CD8-positive, alpha-beta T cell (primary cell): ENCODE measurements at regions of chr22 and their contacts with region 1.

Region 1: GRCh38 chr22:25777870-25778269 is 35.9 kb downstream of the MYO18B start:
- DNase-seq: no peak
- ATAC-seq: no peak
- H3K4me3 ChIP-seq: no peak overlapping the region
- H3K4me3 Mint-ChIP-seq: no peak overlapping the region
- H3K27ac ChIP-seq: no peak overlapping the region
- H3K27ac Mint-ChIP-seq: no peak overlapping the region
- H3K4me1 ChIP-seq: no peaks in the 10 kb centered on the region
- H3K4me1 Mint-ChIP-seq: peaks cover 2% of the 10 kb centered on the region
- H3K27me3 ChIP-seq: no peaks in the 10 kb centered on the region
- H3K27me3 Mint-ChIP-seq: peaks cover 5% of the 10 kb centered on the region
- CTCF ChIP-seq: no peak

Region 2: GRCh38 chr22:25202290-25202921 is 575.5 kb before region 1 on chr22:
- CTCF ChIA-PET with region 1: interaction called, 3 read pairs
- POLR2A ChIA-PET with region 1: no interaction called
- intact Hi-C with region 1: loop called (anchors 5 kb)
- DNase-seq: peak; percentile 18 to 64 (median 52)
- ATAC-seq: peak; percentile 68
- H3K4me3 ChIP-seq: no peak overlapping the region
- H3K4me3 Mint-ChIP-seq: no peak overlapping the region
- H3K27ac ChIP-seq: no peak overlapping the region
- H3K27ac Mint-ChIP-seq: no peak overlapping the region
- H3K4me1 ChIP-seq: no peaks in the 10 kb centered on the region
- H3K4me1 Mint-ChIP-seq: no peaks in the 10 kb centered on the region
- H3K27me3 ChIP-seq: no peaks in the 10 kb centered on the region
- H3K27me3 Mint-ChIP-seq: no peaks in the 10 kb centered on the region
- CTCF ChIP-seq: peak; percentile 88

Region 3: GRCh38 chr22:25235547-25236290 is 542.2 kb before region 1 on chr22:
- CTCF ChIA-PET with region 1: no interaction called
- POLR2A ChIA-PET with region 1: no interaction called
- intact Hi-C with region 1: loop called in 1 of 2 experiments (anchors 5 kb)
- DNase-seq: peak; percentile 14 to 74 (median 48)
- ATAC-seq: peak; percentile 65
- H3K4me3 ChIP-seq: no peak overlapping the region
- H3K4me3 Mint-ChIP-seq: no peak overlapping the region
- H3K27ac ChIP-seq: no peak overlapping the region
- H3K27ac Mint-ChIP-seq: no peak overlapping the region
- H3K4me1 ChIP-seq: peaks cover 5% of the 10 kb centered on the region
- H3K4me1 Mint-ChIP-seq: peaks cover 4% of the 10 kb centered on the region
- H3K27me3 ChIP-seq: no peaks in the 10 kb centered on the region
- H3K27me3 Mint-ChIP-seq: peaks cover 51% of the 10 kb centered on the region
- CTCF ChIP-seq: peak; percentile 32

Region 4: DNA sequence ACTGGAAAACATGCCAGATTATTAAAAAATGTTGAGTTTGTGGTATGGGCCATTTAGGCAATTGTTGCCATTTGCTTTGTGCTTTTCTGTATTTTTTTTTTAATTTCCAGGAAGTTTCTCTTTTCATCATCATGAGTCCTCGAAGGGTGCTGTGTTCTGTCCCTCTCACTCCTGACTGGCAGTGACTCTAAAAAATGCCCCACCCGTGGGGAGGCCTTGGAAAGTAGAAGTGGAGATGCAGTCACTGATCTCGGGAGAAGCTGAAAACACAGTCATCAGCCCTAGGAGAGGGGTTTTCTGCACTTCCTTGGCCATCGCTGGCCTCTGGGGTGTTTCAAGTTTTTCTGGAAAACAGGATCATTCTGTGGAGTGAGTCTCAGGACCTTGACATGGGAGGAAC is 311.9 kb before region 1 on chr22:
- CTCF ChIA-PET with region 1: interaction called, 51 read pairs
- POLR2A ChIA-PET with region 1: no interaction called
- intact Hi-C with region 1: loop called in 1 of 2 experiments (anchors 1 kb)
- DNase-seq: no peak
- ATAC-seq: no peak
- H3K4me3 ChIP-seq: no peak overlapping the region
- H3K4me3 Mint-ChIP-seq: no peak overlapping the region
- H3K27ac ChIP-seq: no peak overlapping the region
- H3K27ac Mint-ChIP-seq: no peak overlapping the region
- H3K4me1 ChIP-seq: no peaks in the 10 kb centered on the region
- H3K4me1 Mint-ChIP-seq: peaks cover 2% of the 10 kb centered on the region
- H3K27me3 ChIP-seq: no peaks in the 10 kb centered on the region
- H3K27me3 Mint-ChIP-seq: no peaks in the 10 kb centered on the region
- CTCF ChIP-seq: no peak

Region 5: GRCh38 chr22:25546751-25547150 is 231.1 kb before region 1 on chr22:
- CTCF ChIA-PET with region 1: interaction called, 4 read pairs
- POLR2A ChIA-PET with region 1: no interaction called
- intact Hi-C with region 1: loop called in 1 of 2 experiments (anchors 10 kb)
- DNase-seq: peak in 1 of 9 experiments; percentile 12
- ATAC-seq: no peak
- H3K4me3 ChIP-seq: no peak overlapping the region
- H3K4me3 Mint-ChIP-seq: no peak overlapping the region
- H3K27ac ChIP-seq: no peak overlapping the region
- H3K27ac Mint-ChIP-seq: no peak overlapping the region
- H3K4me1 ChIP-seq: no peaks in the 10 kb centered on the region
- H3K4me1 Mint-ChIP-seq: no peaks in the 10 kb centered on the region
- H3K27me3 ChIP-seq: no peaks in the 10 kb centered on the region
- H3K27me3 Mint-ChIP-seq: peaks cover under 1% of the 10 kb centered on the region
- CTCF ChIP-seq: no peak

Region 6: GRCh38 chr22:25623310-25623734 is 154.5 kb before region 1 on chr22:
- CTCF ChIA-PET with region 1: no interaction called
- POLR2A ChIA-PET with region 1: no interaction called
- intact Hi-C with region 1: loop called in 1 of 2 experiments (anchors 5 kb)
- DNase-seq: no peak
- ATAC-seq: no peak
- H3K4me3 ChIP-seq: no peak overlapping the region
- H3K4me3 Mint-ChIP-seq: no peak overlapping the region
- H3K27ac ChIP-seq: no peak overlapping the region
- H3K27ac Mint-ChIP-seq: no peak overlapping the region
- H3K4me1 ChIP-seq: no peaks in the 10 kb centered on the region
- H3K4me1 Mint-ChIP-seq: peaks cover 7% of the 10 kb centered on the region
- H3K27me3 ChIP-seq: no peaks in the 10 kb centered on the region
- H3K27me3 Mint-ChIP-seq: no peaks in the 10 kb centered on the region
- CTCF ChIP-seq: no peak

Region 7: GRCh38 chr22:25722626-25723025 is 55.2 kb before region 1 on chr22:
- CTCF ChIA-PET with region 1: no interaction called
- POLR2A ChIA-PET with region 1: no interaction called
- intact Hi-C with region 1: no loop called
- DNase-seq: no peak
- ATAC-seq: no peak
- H3K4me3 ChIP-seq: no peak overlapping the region
- H3K4me3 Mint-ChIP-seq: no peak overlapping the region
- H3K27ac ChIP-seq: no peak overlapping the region
- H3K27ac Mint-ChIP-seq: no peak overlapping the region
- H3K4me1 ChIP-seq: no peaks in the 10 kb centered on the region
- H3K4me1 Mint-ChIP-seq: no peaks in the 10 kb centered on the region
- H3K27me3 ChIP-seq: peaks cover 0 to 2% of the 10 kb centered on the region in 2 experiments
- H3K27me3 Mint-ChIP-seq: no peaks in the 10 kb centered on the region
- CTCF ChIP-seq: no peak

Region 8: GRCh38 chr22:25795478-25795877 is 17.6 kb after region 1 on chr22:
- CTCF ChIA-PET with region 1: no interaction called
- POLR2A ChIA-PET with region 1: no interaction called
- intact Hi-C with region 1: no loop called
- DNase-seq: no peak
- ATAC-seq: no peak
- H3K4me3 ChIP-seq: no peak overlapping the region
- H3K4me3 Mint-ChIP-seq: no peak overlapping the region
- H3K27ac ChIP-seq: no peak overlapping the region
- H3K27ac Mint-ChIP-seq: no peak overlapping the region
- H3K4me1 ChIP-seq: no peaks in the 10 kb centered on the region
- H3K4me1 Mint-ChIP-seq: no peaks in the 10 kb centered on the region
- H3K27me3 ChIP-seq: no peaks in the 10 kb centered on the region
- H3K27me3 Mint-ChIP-seq: peaks cover 11% of the 10 kb centered on the region
- CTCF ChIP-seq: no peak

Region 9: GRCh38 chr22:26330966-26331625 is 553.2 kb after region 1 on chr22:
- CTCF ChIA-PET with region 1: interaction called, 6 read pairs
- POLR2A ChIA-PET with region 1: no interaction called
- intact Hi-C with region 1: loop called in 1 of 2 experiments (anchors 5 kb)
- DNase-seq: peak; percentile 21 to 70 (median 46)
- ATAC-seq: peak; percentile 87
- H3K4me3 ChIP-seq: no peak overlapping the region
- H3K4me3 Mint-ChIP-seq: no peak overlapping the region
- H3K27ac ChIP-seq: no peak overlapping the region
- H3K27ac Mint-ChIP-seq: no peak overlapping the region
- H3K4me1 ChIP-seq: no peaks in the 10 kb centered on the region
- H3K4me1 Mint-ChIP-seq: no peaks in the 10 kb centered on the region
- H3K27me3 ChIP-seq: no peaks in the 10 kb centered on the region
- H3K27me3 Mint-ChIP-seq: peaks cover 23% of the 10 kb centered on the region
- CTCF ChIP-seq: peak; percentile 71